PC-9 (cell line): ENCODE measurements at regions of chr3 and their contacts with region 1.

Region 1: GRCh38 chr3:46929324-46929723 is 47.2 kb downstream of the CCDC12 start:
- DNase-seq: peak in 1 of 2 experiments; percentile 54
- H3K4me3 ChIP-seq: no peak overlapping the region
- H3K27ac ChIP-seq: peak overlapping the region; percentile 26; the same call in 1 of the 2 replicates
- H3K4me1 ChIP-seq: peaks cover 59% of the 10 kb centered on the region
- H3K27me3 ChIP-seq: no peaks in the 10 kb centered on the region
- CTCF ChIP-seq: no peak

Region 2: GRCh38 chr3:46558184-46559043 is 370.9 kb before region 1 on chr3:
- CTCF ChIA-PET with region 1: no interaction called
- POLR2A ChIA-PET with region 1: no interaction called
- intact Hi-C with region 1: no loop called
- DNase-seq: peak; percentile 84 to 89
- H3K4me3 ChIP-seq: peak overlapping the region; percentile 53; the same call in 1 of the 2 replicates
- H3K27ac ChIP-seq: 0 out of 2 replicates have a peak overlapping the region, but pooled peaks have one; percentile 22
- H3K4me1 ChIP-seq: 0 out of 2 replicates have a peak, but pooled peaks cover 4% of the 10 kb centered on the region
- H3K27me3 ChIP-seq: no peaks in the 10 kb centered on the region
- CTCF ChIP-seq: peak; percentile 64

Region 3: GRCh38 chr3:46759239-46760167 is 169.8 kb before region 1 on chr3:
- CTCF ChIA-PET with region 1: no interaction called
- POLR2A ChIA-PET with region 1: no interaction called
- intact Hi-C with region 1: no loop called
- DNase-seq: no peak
- H3K4me3 ChIP-seq: no peak overlapping the region
- H3K27ac ChIP-seq: no peak overlapping the region
- H3K4me1 ChIP-seq: no peaks in the 10 kb centered on the region
- H3K27me3 ChIP-seq: no peaks in the 10 kb centered on the region
- CTCF ChIP-seq: no peak

Region 4: GRCh38 chr3:46895204-46895660 is 34.1 kb before region 1 on chr3:
- CTCF ChIA-PET with region 1: no interaction called
- POLR2A ChIA-PET with region 1: no interaction called
- intact Hi-C with region 1: loop called (anchors 2 kb)
- DNase-seq: peak in 1 of 2 experiments; percentile 68
- H3K4me3 ChIP-seq: no peak overlapping the region
- H3K27ac ChIP-seq: no peak overlapping the region
- H3K4me1 ChIP-seq: 0 out of 2 replicates have a peak, but pooled peaks cover 4% of the 10 kb centered on the region
- H3K27me3 ChIP-seq: no peaks in the 10 kb centered on the region
- CTCF ChIP-seq: peak; percentile 86

Region 5: DNA sequence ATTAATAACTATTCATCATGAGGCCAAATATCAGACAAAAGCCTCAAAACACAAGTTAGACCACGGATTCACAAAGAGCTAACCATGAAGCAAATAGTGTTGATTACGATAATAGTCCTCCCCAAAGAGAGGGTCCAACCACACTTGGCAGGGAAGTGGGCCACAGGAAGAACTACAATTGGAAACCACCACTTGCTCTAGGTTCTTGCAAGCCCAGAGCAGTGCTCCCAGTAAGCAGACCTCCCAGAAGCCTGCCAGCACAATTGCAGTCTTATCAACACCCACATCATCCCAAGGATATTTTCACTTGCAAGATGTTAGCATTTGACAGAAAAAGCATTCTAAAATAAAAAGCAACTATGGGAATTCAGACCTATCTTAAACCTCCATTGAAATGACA is 223.3 kb after region 1 on chr3:
- CTCF ChIA-PET with region 1: interaction called, 28 read pairs
- POLR2A ChIA-PET with region 1: no interaction called
- intact Hi-C with region 1: no loop called
- DNase-seq: no peak
- H3K4me3 ChIP-seq: no peak overlapping the region
- H3K27ac ChIP-seq: no peak overlapping the region
- H3K4me1 ChIP-seq: no peaks in the 10 kb centered on the region
- H3K27me3 ChIP-seq: no peaks in the 10 kb centered on the region
- CTCF ChIP-seq: no peak